Testis (tissue), 5 donors: ENCODE measurements at regions of chr3 and their contacts with region 1.

Region 1: DNA sequence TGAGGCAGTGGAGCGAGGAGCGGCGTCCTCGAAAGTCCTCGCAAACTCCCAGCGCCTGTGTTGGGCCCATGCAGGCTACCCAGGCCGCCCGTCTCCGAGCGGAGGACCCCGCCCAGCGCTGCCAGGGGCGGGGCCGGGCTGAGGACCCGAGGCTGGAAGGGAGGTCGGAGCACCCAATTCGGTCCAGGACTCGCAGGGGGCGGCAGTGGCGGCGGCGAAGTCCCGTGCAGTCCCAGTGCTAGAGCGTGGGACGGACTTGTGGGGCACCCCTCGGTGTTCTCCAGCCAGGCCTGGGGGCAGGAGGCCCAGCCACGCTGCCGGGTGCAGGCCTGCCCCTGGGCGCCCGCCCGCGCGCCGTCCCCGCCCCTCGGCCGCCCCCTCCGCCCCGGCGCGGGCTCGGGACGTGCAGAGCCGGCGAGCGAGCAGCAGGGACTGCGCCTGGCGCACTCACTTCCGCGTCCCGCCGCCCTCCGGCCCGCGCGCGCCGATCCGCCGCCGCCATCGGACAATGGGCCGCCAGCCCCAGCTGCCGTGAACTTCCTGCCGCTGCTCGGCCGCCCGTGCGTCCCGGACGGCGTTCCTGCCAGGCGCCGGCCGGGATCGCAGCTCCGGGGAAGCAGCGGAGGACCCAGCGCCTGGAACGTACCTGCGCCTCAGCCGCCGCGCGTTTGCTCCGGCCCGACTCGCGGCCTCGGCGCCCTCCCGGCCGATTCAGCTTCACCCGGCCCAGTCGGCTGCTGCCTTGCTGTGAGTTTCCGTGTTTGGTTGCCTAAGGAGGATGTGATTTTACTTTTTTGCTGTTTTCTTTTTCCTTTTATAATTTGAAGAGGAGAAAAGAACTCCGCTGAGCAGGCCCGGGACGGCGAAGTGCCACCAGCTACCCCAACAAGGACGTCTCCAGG is 592 bp upstream of the LIMD1 start:
- DNase-seq: peak; percentile 73
- H3K4me3 ChIP-seq: peak overlapping the region; percentile 66 to 68
- H3K27ac ChIP-seq: peak overlapping the region; percentile 69 to 90
- H3K4me1 ChIP-seq: peaks cover 23% of the 10 kb centered on the region
- H3K27me3 ChIP-seq: no peaks in the 10 kb centered on the region
- CTCF ChIP-seq: no peak
- POLR2A ChIP-seq: no peak

Region 2: GRCh38 chr3:45516829-45517228 is 77.1 kb before region 1 on chr3:
- intact Hi-C with region 1: loop called (anchors 10 kb)
- DNase-seq: no peak
- H3K4me3 ChIP-seq: no peak overlapping the region
- H3K27ac ChIP-seq: no peak overlapping the region
- H3K4me1 ChIP-seq: no peaks in the 10 kb centered on the region
- H3K27me3 ChIP-seq: no peaks in the 10 kb centered on the region
- CTCF ChIP-seq: no peak
- POLR2A ChIP-seq: no peak

Region 3: GRCh38 chr3:45656575-45657363 is 62.8 kb after region 1 on chr3:
- intact Hi-C with region 1: loop called (anchors 5 kb)
- DNase-seq: peak; percentile 94
- H3K4me3 ChIP-seq: no peak overlapping the region
- H3K27ac ChIP-seq: no peak overlapping the region
- H3K4me1 ChIP-seq: peaks cover 2% of the 10 kb centered on the region
- H3K27me3 ChIP-seq: no peaks in the 10 kb centered on the region
- CTCF ChIP-seq: peak; percentile 90 to 91 (median 91)
- POLR2A ChIP-seq: no peak